MCF 10A (cell line): ENCODE measurements at regions of chr11 and their contacts with region 1.

Region 1: DNA sequence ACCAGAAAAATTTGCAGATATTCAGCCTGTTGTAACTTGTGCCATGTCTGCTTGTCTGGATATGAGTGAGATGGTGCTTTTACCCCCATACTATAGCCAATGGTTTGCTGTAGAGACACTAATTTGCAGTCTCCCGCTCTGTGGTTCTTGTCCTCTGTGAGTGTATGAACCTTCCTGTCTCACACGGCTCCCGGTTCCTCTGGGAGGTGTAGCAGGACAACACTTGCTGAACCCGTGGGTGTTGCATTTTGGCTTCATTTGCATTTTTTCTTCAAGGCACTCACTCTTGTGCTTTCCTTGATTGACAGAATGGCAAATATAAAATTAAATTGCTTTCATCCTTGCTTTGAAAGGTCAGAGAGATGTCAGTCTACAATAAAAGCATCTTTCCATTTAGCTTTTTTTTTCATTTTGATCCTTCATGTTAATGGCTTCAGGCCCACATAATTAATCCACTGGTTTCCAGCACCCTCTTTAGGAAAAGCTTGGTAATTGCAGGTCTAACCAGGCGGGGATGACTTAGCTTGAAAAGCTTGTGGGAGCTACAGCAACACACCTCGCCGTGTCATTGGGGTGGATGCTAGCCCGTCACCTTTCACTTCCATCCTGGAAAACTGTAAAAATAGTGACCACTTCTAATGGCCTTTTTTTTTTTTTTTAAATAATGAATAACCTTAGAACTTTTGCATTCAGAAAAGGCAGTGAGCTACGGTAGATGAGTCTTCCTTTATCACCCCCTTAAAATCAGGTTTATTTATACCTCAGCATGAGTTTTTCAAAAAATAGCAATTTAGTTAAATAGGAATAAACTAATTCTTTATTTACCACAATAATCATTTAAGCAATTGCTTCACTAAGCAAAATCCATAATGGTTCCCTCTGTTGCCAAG is 27.4 kb upstream of the ST14 start:
- DNase-seq: peak; percentile 78
- H3K4me3 Mint-ChIP-seq: no peak overlapping the region
- H3K27ac Mint-ChIP-seq: no peak overlapping the region
- H3K4me1 Mint-ChIP-seq: no peaks in the 10 kb centered on the region
- H3K27me3 Mint-ChIP-seq: no peaks in the 10 kb centered on the region
- CTCF ChIP-seq: peak; percentile 88

Region 2: GRCh38 chr11:129922674-129923073 is 209.5 kb before region 1 on chr11:
- CTCF ChIA-PET with region 1: interaction called, 234 read pairs
- POLR2A ChIA-PET with region 1: interaction called, 14 read pairs
- intact Hi-C with region 1: loop called (anchors 1 kb)
- DNase-seq: no peak
- H3K4me3 Mint-ChIP-seq: no peak overlapping the region
- H3K27ac Mint-ChIP-seq: no peak overlapping the region
- H3K4me1 Mint-ChIP-seq: peaks cover 5% of the 10 kb centered on the region
- H3K27me3 Mint-ChIP-seq: no peaks in the 10 kb centered on the region
- CTCF ChIP-seq: no peak

Region 3: DNA sequence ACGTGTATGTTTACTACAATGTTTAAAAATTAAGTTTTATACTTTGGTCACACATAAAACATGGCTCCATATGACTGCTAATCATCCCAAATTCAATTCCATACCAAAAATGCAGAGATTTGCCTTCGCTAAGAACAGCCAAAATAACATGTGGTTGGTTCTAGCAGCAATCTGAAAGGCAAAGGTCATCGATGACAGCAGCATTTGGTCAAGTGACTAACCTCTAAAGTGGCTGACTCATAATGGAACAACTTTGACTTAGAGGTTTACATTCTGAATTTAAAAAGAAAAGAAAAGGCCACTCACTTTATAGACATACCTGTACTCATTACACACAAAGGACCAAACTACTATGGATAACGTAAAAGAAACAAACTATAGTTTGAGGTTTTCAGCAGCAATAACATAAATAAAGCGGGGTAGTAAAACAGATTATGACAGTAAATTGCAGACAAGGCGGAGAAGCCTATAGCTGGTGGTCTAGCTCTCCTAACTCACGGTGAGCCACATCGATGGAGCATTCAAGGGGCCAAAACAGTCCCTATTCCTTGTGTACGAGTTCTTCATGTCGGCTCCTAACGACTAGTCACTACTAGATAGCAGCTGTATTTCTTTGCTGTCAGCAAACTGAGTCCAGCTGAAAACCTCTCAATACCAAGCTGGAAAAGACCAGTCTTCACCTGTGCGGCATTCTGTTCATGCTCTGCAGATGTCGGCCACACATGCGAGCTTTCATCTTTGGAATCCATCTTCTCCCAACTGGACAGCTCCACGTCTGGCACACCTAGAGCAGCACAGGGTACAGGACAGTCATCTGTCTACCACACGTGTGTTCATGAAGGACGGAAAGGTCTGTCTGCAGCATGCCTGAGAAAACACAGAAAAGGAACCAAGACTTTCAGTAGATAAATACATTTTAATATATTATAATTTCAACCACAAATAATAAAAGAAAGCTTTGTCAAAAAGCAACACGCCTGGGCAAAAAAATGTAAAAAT is 171.7 kb before region 1 on chr11:
- CTCF ChIA-PET with region 1: interaction called, 10 read pairs
- POLR2A ChIA-PET with region 1: no interaction called
- intact Hi-C with region 1: no loop called
- DNase-seq: peak; percentile 63
- H3K4me3 Mint-ChIP-seq: no peak overlapping the region
- H3K27ac Mint-ChIP-seq: no peak overlapping the region
- H3K4me1 Mint-ChIP-seq: peaks cover 7% of the 10 kb centered on the region
- H3K27me3 Mint-ChIP-seq: no peaks in the 10 kb centered on the region
- CTCF ChIP-seq: no peak

Region 4: DNA sequence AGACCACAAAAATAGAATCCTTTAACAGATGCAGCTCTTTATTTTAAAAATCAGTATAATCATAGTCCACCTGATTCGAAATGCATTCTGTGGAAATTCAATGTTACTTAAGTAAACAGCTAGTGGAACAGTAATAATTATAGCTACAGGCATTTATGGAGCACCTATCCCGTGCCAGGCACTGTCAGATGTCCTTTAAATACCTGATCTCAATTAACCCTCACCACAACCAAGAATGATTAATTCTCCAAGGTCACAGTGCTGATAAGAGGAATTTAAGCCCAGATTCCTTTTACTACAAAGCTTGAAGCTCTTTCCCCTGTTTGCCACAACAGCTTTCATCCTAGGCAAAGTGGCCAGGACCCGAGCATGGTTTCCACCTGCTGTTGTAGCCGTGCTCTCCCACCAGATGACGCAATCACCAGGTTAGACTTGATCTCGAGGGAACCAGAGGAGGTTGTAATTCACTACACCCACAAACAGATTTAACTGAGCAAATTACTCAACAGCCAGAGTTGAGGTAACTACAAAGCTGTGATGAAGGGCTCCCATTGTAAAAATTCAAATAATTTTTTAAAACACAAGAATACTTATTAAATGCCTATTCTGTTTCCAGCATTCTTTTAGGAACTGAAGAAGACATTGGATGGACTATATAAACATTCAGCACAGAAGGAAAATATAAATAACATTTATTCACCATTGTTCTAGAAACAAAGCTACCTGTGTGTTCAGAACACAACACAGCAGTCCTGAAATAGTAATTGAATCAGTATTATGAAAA is 139.9 kb before region 1 on chr11:
- CTCF ChIA-PET with region 1: interaction called, 39 read pairs
- POLR2A ChIA-PET with region 1: interaction called, 3 read pairs
- intact Hi-C with region 1: no loop called
- DNase-seq: peak; percentile 81
- H3K4me3 Mint-ChIP-seq: no peak overlapping the region
- H3K27ac Mint-ChIP-seq: no peak overlapping the region
- H3K4me1 Mint-ChIP-seq: peaks cover 24% of the 10 kb centered on the region
- H3K27me3 Mint-ChIP-seq: no peaks in the 10 kb centered on the region
- CTCF ChIP-seq: peak; percentile 32

Region 5: GRCh38 chr11:130029137-130029536 is 103.1 kb before region 1 on chr11:
- CTCF ChIA-PET with region 1: no interaction called
- POLR2A ChIA-PET with region 1: no interaction called
- intact Hi-C with region 1: no loop called
- DNase-seq: peak; percentile 31
- H3K4me3 Mint-ChIP-seq: no peak overlapping the region
- H3K27ac Mint-ChIP-seq: no peak overlapping the region
- H3K4me1 Mint-ChIP-seq: peaks cover 11% of the 10 kb centered on the region
- H3K27me3 Mint-ChIP-seq: no peaks in the 10 kb centered on the region
- CTCF ChIP-seq: no peak

Region 6: DNA sequence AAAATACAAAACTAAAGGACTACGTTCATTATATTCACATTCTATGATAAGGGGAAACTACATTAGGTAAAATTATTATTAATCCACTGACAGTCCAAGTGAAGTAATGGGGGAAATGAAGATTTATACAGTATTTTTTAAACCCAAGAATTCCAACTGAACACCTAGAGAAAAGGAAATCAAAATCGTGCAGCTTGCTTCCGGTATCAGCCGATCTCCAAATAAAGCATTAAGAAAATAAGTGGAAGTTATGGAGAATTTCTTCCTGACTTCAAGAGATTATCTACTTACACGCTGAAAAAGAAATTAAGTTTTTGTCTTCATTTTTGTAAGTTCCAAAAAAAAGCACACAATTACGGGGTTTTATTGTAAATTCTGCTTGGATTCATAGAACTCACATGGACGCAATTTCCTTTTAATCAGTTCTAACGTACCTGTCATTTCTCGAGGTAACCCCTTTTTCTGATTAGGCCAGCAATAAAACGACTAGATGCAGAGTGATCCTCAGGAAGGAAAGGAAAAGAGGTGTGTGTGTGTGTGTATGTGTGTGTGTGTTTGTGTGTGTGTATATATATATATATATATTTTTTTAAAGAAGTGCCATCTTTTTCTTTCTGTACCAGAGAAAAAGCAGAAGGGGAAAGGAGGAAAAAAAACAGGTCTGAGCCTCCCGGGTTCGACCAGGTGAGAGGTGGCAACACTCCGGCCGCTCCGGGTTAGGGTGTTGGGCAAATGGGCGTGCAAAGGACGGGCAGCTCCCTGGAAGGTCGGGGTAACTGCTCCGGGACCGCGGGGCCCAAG is 181.4 kb after region 1 on chr11:
- CTCF ChIA-PET with region 1: no interaction called
- POLR2A ChIA-PET with region 1: no interaction called
- intact Hi-C with region 1: no loop called
- DNase-seq: peak; percentile 51
- H3K4me3 Mint-ChIP-seq: peak overlapping the region; percentile 86
- H3K27ac Mint-ChIP-seq: peak overlapping the region; percentile 86
- H3K4me1 Mint-ChIP-seq: peaks cover 25% of the 10 kb centered on the region
- H3K27me3 Mint-ChIP-seq: no peaks in the 10 kb centered on the region
- CTCF ChIP-seq: no peak